ENCODE measurements at regions of chr6 and their contacts with region 1.

Region 1: DNA sequence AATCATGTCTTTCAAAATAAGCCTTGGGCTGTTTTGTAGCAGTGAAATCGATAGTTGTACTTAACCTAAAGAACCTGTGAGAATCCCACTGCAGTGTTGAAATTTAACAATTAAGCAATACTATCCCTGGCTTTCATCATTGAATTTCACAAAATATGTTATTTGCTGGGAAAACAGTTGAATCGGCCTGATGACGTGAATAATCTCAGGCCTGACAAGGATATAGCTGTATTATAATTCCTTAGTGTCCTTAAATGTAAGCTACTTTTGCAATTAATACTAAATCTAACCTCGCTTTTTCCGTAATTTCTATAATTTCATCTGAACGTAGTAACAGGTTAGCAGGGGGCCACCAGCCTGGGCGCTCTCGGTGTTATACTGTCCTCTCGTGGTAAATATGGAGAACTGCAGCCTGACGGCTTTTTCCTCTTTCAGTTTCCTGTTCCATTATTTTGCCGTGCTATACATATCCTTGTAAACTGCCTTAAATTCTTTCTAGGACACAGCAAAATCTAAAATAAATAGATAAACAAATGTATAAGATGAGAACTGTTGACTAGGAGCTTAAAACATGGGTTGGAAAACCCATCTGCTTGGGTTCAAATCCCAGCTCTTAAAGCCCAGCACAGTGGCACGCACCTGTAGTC is 24.0 kb downstream of the MTFR2 start:
- DNase-seq: peak; percentile 59
- H3K4me3 Mint-ChIP-seq: no peak overlapping the region
- H3K27ac Mint-ChIP-seq: peak overlapping the region; percentile 7
- H3K4me1 Mint-ChIP-seq: peaks cover 8% of the 10 kb centered on the region
- H3K27me3 Mint-ChIP-seq: peaks cover 1% of the 10 kb centered on the region

Region 2: GRCh38 chr6:135451693-135452092 is 774.5 kb before region 1 on chr6:
- CTCF ChIA-PET with region 1: interaction called, 17 read pairs
- POLR2A ChIA-PET with region 1: no interaction called
- DNase-seq: no peak
- H3K4me3 Mint-ChIP-seq: no peak overlapping the region
- H3K27ac Mint-ChIP-seq: no peak overlapping the region
- H3K4me1 Mint-ChIP-seq: peaks cover 7% of the 10 kb centered on the region
- H3K27me3 Mint-ChIP-seq: no peaks in the 10 kb centered on the region

Region 3: GRCh38 chr6:135497412-135498269 is 728.5 kb before region 1 on chr6 and contains the start of gene AHI1:
- CTCF ChIA-PET with region 1: interaction called, 13 read pairs
- POLR2A ChIA-PET with region 1: no interaction called
- DNase-seq: peak; percentile 88
- H3K4me3 Mint-ChIP-seq: no peak within 1 kb of the TSS
- H3K27ac Mint-ChIP-seq: no peak within 1 kb of the TSS
- H3K4me1 Mint-ChIP-seq: peaks cover 16% of the 10 kb centered on the region
- H3K27me3 Mint-ChIP-seq: peaks cover 3% of the 10 kb centered on the region
- total RNA-seq, gene AHI1: 18.5 to 21.5 TPM

Region 4: GRCh38 chr6:135506270-135506997 is 719.7 kb before region 1 on chr6:
- CTCF ChIA-PET with region 1: interaction called, 24 read pairs
- POLR2A ChIA-PET with region 1: no interaction called
- DNase-seq: no peak
- H3K4me3 Mint-ChIP-seq: no peak overlapping the region
- H3K27ac Mint-ChIP-seq: peak overlapping the region; percentile 12
- H3K4me1 Mint-ChIP-seq: peaks cover 7% of the 10 kb centered on the region
- H3K27me3 Mint-ChIP-seq: peaks cover 1% of the 10 kb centered on the region

Region 5: GRCh38 chr6:135535989-135536414 is 690.1 kb before region 1 on chr6:
- CTCF ChIA-PET with region 1: interaction called, 43 read pairs
- POLR2A ChIA-PET with region 1: no interaction called
- DNase-seq: no peak
- H3K4me3 Mint-ChIP-seq: no peak overlapping the region
- H3K27ac Mint-ChIP-seq: peak overlapping the region; percentile 67
- H3K4me1 Mint-ChIP-seq: peaks cover 49% of the 10 kb centered on the region
- H3K27me3 Mint-ChIP-seq: no peaks in the 10 kb centered on the region

Region 6: DNA sequence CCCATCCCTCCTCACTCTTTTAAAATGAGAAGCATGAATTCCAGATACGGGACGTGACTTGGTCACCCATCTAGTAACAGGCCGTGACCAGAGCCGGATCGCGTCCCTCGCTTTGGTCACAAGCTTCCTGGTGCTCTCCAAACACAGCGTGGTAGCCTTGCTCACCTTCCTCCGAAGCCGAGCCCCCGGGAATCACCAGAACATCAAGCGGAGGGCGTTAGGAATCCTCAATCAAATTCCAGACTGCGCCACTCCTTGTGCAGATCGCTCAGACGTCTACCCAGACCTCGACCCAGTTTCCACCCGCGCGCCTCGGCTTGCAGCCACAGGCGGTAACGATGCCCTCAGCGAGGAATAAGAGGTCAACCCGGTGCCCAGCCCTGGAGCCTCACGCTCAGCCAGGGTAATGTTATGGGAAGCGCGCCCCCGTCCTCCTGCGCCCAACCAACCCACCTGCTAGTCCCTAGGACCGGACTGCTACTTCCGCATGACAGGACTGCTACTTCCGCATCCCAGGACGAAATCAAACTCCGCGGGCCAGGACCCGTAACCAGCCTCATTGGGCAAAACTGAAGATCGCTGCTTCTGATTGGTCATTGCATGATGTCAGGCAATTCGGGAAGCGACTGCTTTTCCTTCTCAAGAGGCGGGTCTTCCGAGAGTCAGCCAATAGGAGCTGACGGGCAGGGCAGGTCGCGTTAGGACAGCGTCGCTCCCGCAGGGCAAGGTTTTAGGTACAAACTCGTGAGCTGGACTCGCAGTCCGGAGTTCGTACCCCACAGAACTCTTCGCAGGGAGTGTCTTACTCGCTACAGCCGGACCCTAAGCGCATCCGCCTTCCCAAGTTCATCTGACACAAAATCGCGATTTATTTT is 23.9 kb after region 1 on chr6 and contains the start of gene MTFR2:
- CTCF ChIA-PET with region 1: interaction called, 5 read pairs
- POLR2A ChIA-PET with region 1: interaction called, 11 read pairs
- DNase-seq: peak; percentile 96
- H3K4me3 Mint-ChIP-seq: peak within 1 kb of the TSS; percentile 96
- H3K27ac Mint-ChIP-seq: peak within 1 kb of the TSS; percentile 82
- H3K4me1 Mint-ChIP-seq: peaks cover 78% of the 10 kb centered on the region
- H3K27me3 Mint-ChIP-seq: no peaks in the 10 kb centered on the region
- total RNA-seq, gene MTFR2: 20.4 to 21.4 TPM

Region 7: GRCh38 chr6:136317021-136317694 is 91.0 kb after region 1 on chr6:
- CTCF ChIA-PET with region 1: interaction called, 11 read pairs
- POLR2A ChIA-PET with region 1: interaction called, 3 read pairs
- DNase-seq: peak; percentile 66
- H3K4me3 Mint-ChIP-seq: no peak overlapping the region
- H3K27ac Mint-ChIP-seq: no peak overlapping the region
- H3K4me1 Mint-ChIP-seq: no peaks in the 10 kb centered on the region
- H3K27me3 Mint-ChIP-seq: peaks cover 6% of the 10 kb centered on the region